ENCODE measurements at regions of chr17 and their contacts with region 1.

Region 1: GRCh38 chr17:40287494-40288369 is at the start of gene CDC6:
- DNase-seq: peak; percentile 99
- ATAC-seq: peak; percentile 88
- H3K4me3 ChIP-seq: peak within 1 kb of the TSS; percentile 66
- H3K27ac ChIP-seq: peak within 1 kb of the TSS; percentile 29
- H3K4me1 ChIP-seq: peaks cover 13% of the 10 kb centered on the region
- H3K27me3 ChIP-seq: no peaks in the 10 kb centered on the region
- CTCF ChIP-seq: no peak
- POLR2A ChIP-seq: peak; percentile 85
- RAD21 ChIP-seq: no peak
- total RNA-seq, gene CDC6: 25.6 and 27.8 TPM in 2 replicates

Region 2: GRCh38 chr17:40018211-40019121 is 269.3 kb before region 1 on chr17:
- CTCF ChIA-PET with region 1: no interaction called
- POLR2A ChIA-PET with region 1: no interaction called
- dilution Hi-C with region 1: no loop called
- in situ Hi-C with region 1: loop called (anchors 10 kb)
- intact Hi-C with region 1: loop called (anchors 1 kb)
- DNase-seq: no peak
- ATAC-seq: peak; percentile 14
- H3K4me3 ChIP-seq: no peak overlapping the region
- H3K27ac ChIP-seq: peak overlapping the region; percentile 64
- H3K4me1 ChIP-seq: peaks cover 33% of the 10 kb centered on the region
- H3K27me3 ChIP-seq: no peaks in the 10 kb centered on the region
- CTCF ChIP-seq: no peak
- POLR2A ChIP-seq: no peak
- RAD21 ChIP-seq: no peak

Region 3: DNA sequence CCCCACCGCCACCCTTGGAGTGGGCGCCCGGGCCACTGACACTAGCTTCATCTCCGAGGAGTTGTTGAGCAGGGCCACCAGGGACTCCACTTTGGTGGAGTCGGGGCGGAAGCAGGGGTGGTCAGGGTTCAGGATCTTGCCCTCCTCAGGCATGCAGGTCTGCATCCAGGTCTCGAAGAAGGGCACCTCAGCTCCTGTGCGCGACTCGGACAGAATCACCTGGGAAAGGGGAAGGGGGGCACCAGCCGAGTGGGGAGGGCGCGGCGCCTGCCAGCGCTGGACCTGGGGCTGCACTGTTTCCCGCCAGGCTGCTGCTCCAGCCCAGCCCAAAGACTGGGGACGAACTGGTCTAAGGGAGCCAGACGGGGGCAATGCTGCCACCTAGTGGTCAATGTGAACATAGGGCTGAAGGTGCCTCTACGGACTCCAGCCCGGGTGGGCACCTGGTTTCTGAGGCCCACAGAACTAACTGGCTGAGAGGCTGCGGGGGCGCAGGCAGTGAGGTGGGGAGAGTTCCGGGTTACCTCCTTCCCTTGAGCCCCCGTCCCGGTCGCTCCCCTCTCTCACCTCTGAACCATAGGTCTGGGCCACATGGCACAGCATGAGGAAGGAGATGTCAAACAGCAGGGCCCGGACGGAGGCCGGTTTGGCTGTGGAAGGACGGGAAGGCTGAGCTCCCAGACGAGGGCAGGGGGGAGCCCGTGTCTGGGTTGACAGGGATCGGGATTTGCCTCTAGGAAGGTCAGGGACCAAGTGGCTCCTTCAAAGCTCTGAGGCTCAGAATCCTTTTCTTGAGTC is 260.7 kb before region 1 on chr17:
- CTCF ChIA-PET with region 1: no interaction called
- POLR2A ChIA-PET with region 1: no interaction called
- dilution Hi-C with region 1: no loop called
- in situ Hi-C with region 1: loop called (anchors 10 kb)
- intact Hi-C with region 1: no loop called
- DNase-seq: peak; percentile 70
- ATAC-seq: peak; percentile 97
- H3K4me3 ChIP-seq: no peak overlapping the region
- H3K27ac ChIP-seq: no peak overlapping the region
- H3K4me1 ChIP-seq: peaks cover 9% of the 10 kb centered on the region; the same call in 1 of the 2 replicates
- H3K27me3 ChIP-seq: no peaks in the 10 kb centered on the region
- CTCF ChIP-seq: peak; percentile 89
- POLR2A ChIP-seq: no peak
- RAD21 ChIP-seq: peak; percentile 82

Region 4: GRCh38 chr17:40203131-40203530 is 84.6 kb before region 1 on chr17:
- CTCF ChIA-PET with region 1: interaction called, 7 read pairs
- POLR2A ChIA-PET with region 1: no interaction called
- dilution Hi-C with region 1: no loop called
- in situ Hi-C with region 1: loop called (anchors 5 kb)
- intact Hi-C with region 1: loop called (anchors 1 kb)
- DNase-seq: no peak
- ATAC-seq: no peak
- H3K4me3 ChIP-seq: no peak overlapping the region
- H3K27ac ChIP-seq: no peak overlapping the region
- H3K4me1 ChIP-seq: peaks cover 3% of the 10 kb centered on the region
- H3K27me3 ChIP-seq: no peaks in the 10 kb centered on the region
- CTCF ChIP-seq: no peak
- POLR2A ChIP-seq: no peak
- RAD21 ChIP-seq: no peak

Region 5: DNA sequence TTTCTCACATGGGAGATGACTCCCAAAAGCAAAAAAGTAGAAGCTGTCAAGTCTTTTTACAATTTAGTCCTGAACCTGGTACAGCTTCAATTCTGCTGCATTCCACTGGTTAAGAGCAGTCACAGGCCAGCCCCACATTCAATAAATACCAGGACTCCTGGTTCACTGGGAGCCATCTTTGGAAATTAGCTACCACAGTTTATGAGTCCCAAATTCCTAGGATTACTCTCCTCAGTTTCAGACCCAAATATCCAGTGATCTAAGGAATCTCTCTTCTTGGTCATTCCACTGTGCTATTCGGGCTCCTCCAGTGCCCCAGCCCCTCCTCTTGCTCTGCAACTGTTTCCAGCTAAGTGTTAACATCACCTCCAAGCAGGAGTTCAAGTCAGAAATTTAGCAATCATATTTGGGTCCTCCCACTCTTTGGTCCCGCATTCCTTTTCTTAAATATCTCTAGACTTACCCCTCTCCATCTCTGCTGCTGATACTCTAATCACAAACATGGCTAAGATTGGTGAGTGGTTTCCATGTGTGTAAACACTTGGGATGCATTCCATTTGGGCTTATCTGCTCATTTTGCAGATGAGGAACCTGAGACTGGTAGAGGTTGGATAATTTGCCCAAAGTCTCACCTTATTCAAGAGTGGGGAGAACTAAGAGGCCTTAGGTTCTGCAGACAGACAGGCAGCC is 78.2 kb before region 1 on chr17:
- CTCF ChIA-PET with region 1: no interaction called
- POLR2A ChIA-PET with region 1: no interaction called
- dilution Hi-C with region 1: no loop called
- in situ Hi-C with region 1: loop called (anchors 5 kb)
- intact Hi-C with region 1: no loop called
- DNase-seq: peak; percentile 54
- ATAC-seq: peak; percentile 94
- H3K4me3 ChIP-seq: no peak overlapping the region
- H3K27ac ChIP-seq: peak overlapping the region; percentile 79; the same call in 1 of the 2 replicates
- H3K4me1 ChIP-seq: peaks cover 12% of the 10 kb centered on the region
- H3K27me3 ChIP-seq: no peaks in the 10 kb centered on the region
- CTCF ChIP-seq: no peak
- POLR2A ChIP-seq: no peak
- RAD21 ChIP-seq: no peak

Region 6: DNA sequence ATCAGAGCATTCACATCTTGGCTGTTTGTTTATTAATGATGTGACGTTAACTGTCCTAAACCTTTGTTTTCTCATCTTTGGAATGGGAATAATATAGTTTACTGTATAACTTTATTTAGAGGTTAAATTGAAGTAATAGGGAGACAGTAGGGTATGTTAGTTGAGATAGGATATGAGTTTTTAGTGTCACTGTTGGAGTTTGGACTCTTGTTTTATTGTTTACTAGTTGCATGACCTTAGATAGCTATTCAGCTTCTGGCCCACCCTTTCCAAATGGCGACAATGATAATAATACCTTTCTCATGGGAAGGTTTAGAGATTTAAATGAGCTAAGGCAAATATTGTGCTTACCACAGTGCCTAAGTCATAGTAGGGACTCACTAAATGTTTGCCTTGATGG is 28.2 kb before region 1 on chr17:
- CTCF ChIA-PET with region 1: no interaction called
- POLR2A ChIA-PET with region 1: no interaction called
- dilution Hi-C with region 1: no loop called
- in situ Hi-C with region 1: no loop called
- intact Hi-C with region 1: no loop called
- DNase-seq: no peak
- ATAC-seq: no peak
- H3K4me3 ChIP-seq: no peak overlapping the region
- H3K27ac ChIP-seq: no peak overlapping the region
- H3K4me1 ChIP-seq: no peaks in the 10 kb centered on the region
- H3K27me3 ChIP-seq: no peaks in the 10 kb centered on the region
- CTCF ChIP-seq: no peak
- POLR2A ChIP-seq: no peak
- RAD21 ChIP-seq: no peak

Region 7: GRCh38 chr17:40374821-40375498 is 87.2 kb after region 1 on chr17:
- CTCF ChIA-PET with region 1: no interaction called
- POLR2A ChIA-PET with region 1: no interaction called
- dilution Hi-C with region 1: no loop called
- in situ Hi-C with region 1: no loop called
- intact Hi-C with region 1: no loop called
- DNase-seq: no peak
- ATAC-seq: no peak
- H3K4me3 ChIP-seq: no peak overlapping the region
- H3K27ac ChIP-seq: no peak overlapping the region
- H3K4me1 ChIP-seq: no peaks in the 10 kb centered on the region
- H3K27me3 ChIP-seq: no peaks in the 10 kb centered on the region
- CTCF ChIP-seq: no peak
- POLR2A ChIP-seq: no peak
- RAD21 ChIP-seq: no peak